ENCODE measurements at regions of chr2 and their contacts with region 1.

Region 1: DNA sequence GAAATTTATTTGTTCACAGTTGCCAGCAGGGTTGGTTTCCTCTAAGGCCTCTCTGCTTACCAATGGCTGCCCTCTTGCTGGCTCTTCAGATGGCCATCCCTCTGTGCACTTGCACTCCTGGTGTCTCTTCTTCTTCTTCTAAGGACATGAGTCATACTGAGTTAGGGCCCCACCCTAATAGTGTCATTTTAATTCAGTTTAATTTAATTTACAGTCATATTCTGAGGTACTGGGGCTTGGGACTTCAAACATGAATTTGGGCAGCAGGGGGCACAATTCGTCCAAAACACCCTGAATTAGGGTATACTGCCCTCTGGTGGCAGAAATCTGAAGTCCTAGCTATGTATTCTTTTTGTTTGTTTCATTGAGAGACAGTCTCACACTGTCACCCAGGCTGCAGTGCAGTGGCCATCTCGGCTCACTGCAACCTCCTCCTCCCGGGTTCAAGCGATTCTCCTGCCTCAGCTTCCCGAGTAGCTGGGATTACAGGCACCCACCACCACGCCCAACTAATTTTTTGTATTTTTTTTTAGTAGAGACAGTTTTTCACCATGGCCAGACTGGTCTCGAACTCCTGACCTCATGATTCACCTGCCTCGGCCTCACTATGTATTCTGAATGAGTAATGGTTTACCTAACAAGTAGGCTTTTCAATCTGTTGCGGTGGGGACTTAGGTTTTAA is 19.8 kb downstream of the SLC4A1AP start:
- DNase-seq: peak; percentile 78
- H3K4me3 ChIP-seq: peak overlapping the region in 1 of 2 experiments; percentile 34; a peak in 1 of 4 replicates
- H3K27ac ChIP-seq: peak overlapping the region in 1 of 2 experiments; percentile 93; a peak in 2 of 4 replicates
- H3K4me1 ChIP-seq: peaks cover 0 to 19% of the 10 kb centered on the region in 2 experiments; a peak in 2 of 4 replicates
- H3K27me3 ChIP-seq: no peaks in the 10 kb centered on the region
- CTCF ChIP-seq: peak; percentile 100
- EP300 ChIP-seq: no peak
- RAD21 ChIP-seq: peak; percentile 83

Region 2: GRCh38 chr2:27409321-27410073 is 274.0 kb before region 1 on chr2 and contains the start of gene PPM1G:
- CTCF ChIA-PET with region 1: interaction called, 35 read pairs
- POLR2A ChIA-PET with region 1: interaction called, 3 read pairs
- DNase-seq: peak; percentile 99
- H3K4me3 ChIP-seq: peak within 1 kb of the TSS; percentile 78 to 98
- H3K27ac ChIP-seq: peak within 1 kb of the TSS; percentile 82 to 90
- H3K4me1 ChIP-seq: peaks cover 0 to 6% of the 10 kb centered on the region in 2 experiments; a peak in 2 of 4 replicates
- H3K27me3 ChIP-seq: no peaks in the 10 kb centered on the region
- CTCF ChIP-seq: no peak
- EP300 ChIP-seq: no peak
- RAD21 ChIP-seq: no peak
- polyA plus RNA-seq, gene PPM1G: 99.7 and 113 TPM in 2 replicates

Region 3: GRCh38 chr2:27628767-27629709 is 54.5 kb before region 1 on chr2 and contains the starts of genes CCDC121 and GPN1:
- CTCF ChIA-PET with region 1: interaction called, 20 read pairs
- POLR2A ChIA-PET with region 1: no interaction called
- DNase-seq: peak; percentile 91
- H3K4me3 ChIP-seq: peak within 1 kb of the TSS; percentile 63 to 84
- H3K27ac ChIP-seq: peak within 1 kb of the TSS; percentile 80 to 93
- H3K4me1 ChIP-seq: peaks cover 11 to 19% of the 10 kb centered on the region in 2 experiments
- H3K27me3 ChIP-seq: no peaks in the 10 kb centered on the region
- CTCF ChIP-seq: no peak
- EP300 ChIP-seq: peak; percentile 44 to 59; a peak in 2 of 4 replicates
- RAD21 ChIP-seq: peak; percentile 25; the same call in 1 of the 2 replicates
- polyA plus RNA-seq, gene CCDC121: 2.3 and 2.7 TPM in 2 replicates
- polyA plus RNA-seq, gene GPN1: 74.0 and 92.8 TPM in 2 replicates

Region 4: GRCh38 chr2:27655155-27655951 is 28.2 kb before region 1 on chr2:
- CTCF ChIA-PET with region 1: interaction called, 77 read pairs
- POLR2A ChIA-PET with region 1: no interaction called
- DNase-seq: no peak
- H3K4me3 ChIP-seq: no peak overlapping the region
- H3K27ac ChIP-seq: no peak overlapping the region
- H3K4me1 ChIP-seq: no peaks in the 10 kb centered on the region
- H3K27me3 ChIP-seq: no peaks in the 10 kb centered on the region
- CTCF ChIP-seq: no peak
- EP300 ChIP-seq: no peak
- RAD21 ChIP-seq: no peak

Region 5: DNA sequence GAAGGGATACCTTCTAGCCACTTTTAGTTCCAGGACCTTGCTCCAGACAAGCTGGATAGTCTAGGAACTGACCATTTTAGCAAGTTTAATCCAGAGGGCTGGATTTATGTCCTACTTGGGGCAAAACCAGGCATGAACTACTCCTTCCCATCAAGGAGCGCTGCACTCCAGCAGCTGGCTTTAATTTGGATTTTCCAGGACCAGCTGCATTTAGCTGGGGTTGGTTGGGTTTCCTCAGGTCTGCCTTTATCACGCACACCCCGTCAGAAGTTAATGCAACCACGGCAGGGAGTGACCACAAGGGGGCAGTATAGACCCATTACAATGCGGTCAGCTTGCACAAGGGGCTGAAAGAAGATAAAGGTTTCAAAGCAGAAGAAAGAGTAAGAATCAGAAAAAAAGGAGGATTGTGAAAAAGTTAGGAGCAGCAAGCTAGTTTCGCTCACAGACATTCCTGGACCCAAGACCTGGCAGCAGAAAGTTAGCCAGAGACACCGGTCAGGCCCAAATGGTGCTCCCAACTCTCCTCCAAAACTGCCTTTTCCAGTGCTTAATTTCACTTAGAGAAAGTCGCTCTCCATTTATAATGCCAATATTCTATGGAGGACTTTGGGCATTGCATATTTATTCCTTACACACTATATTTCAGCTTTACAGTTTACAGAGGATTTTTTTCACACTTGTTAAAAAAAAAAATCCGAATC is 20.3 kb after region 1 on chr2:
- CTCF ChIA-PET with region 1: interaction called, 333 read pairs
- POLR2A ChIA-PET with region 1: interaction called, 3 read pairs
- DNase-seq: peak; percentile 88
- H3K4me3 ChIP-seq: no peak overlapping the region; a peak in 1 of 4 replicates
- H3K27ac ChIP-seq: peak overlapping the region in 1 of 2 experiments; percentile 29; a peak in 1 of 4 replicates
- H3K4me1 ChIP-seq: peaks cover 10 to 16% of the 10 kb centered on the region in 2 experiments; a peak in 3 of 4 replicates
- H3K27me3 ChIP-seq: no peaks in the 10 kb centered on the region
- CTCF ChIP-seq: peak; percentile 99
- EP300 ChIP-seq: peak in 1 of 2 experiments; percentile 48; a peak in 1 of 4 replicates
- RAD21 ChIP-seq: peak; percentile 98

Region 6: GRCh38 chr2:27729198-27729597 is 45.7 kb after region 1 on chr2:
- CTCF ChIA-PET with region 1: interaction called, 18 read pairs
- POLR2A ChIA-PET with region 1: no interaction called
- DNase-seq: no peak
- H3K4me3 ChIP-seq: no peak overlapping the region
- H3K27ac ChIP-seq: no peak overlapping the region
- H3K4me1 ChIP-seq: peaks cover 0 to 2% of the 10 kb centered on the region in 2 experiments; a peak in 1 of 4 replicates
- H3K27me3 ChIP-seq: no peaks in the 10 kb centered on the region
- CTCF ChIP-seq: no peak
- EP300 ChIP-seq: no peak
- RAD21 ChIP-seq: no peak

Region 7: GRCh38 chr2:28239207-28239606 is 555.7 kb after region 1 on chr2:
- CTCF ChIA-PET with region 1: no interaction called
- POLR2A ChIA-PET with region 1: no interaction called
- DNase-seq: no peak
- H3K4me3 ChIP-seq: no peak overlapping the region
- H3K27ac ChIP-seq: no peak overlapping the region
- H3K4me1 ChIP-seq: peaks cover 0 to 7% of the 10 kb centered on the region in 2 experiments; a peak in 1 of 4 replicates
- H3K27me3 ChIP-seq: no peaks in the 10 kb centered on the region
- CTCF ChIP-seq: no peak
- EP300 ChIP-seq: no peak
- RAD21 ChIP-seq: no peak

Measured in SK-N-SH (cell line).